GM13976 (cell line): ENCODE measurements at regions of chr6 and their contacts with region 1.

Region 1: GRCh38 chr6:10404107-10404798 is 10.6 kb downstream of the TFAP2A start:
- DNase-seq: peak; percentile 97
- CTCF ChIP-seq: peak; percentile 68

Region 2: DNA sequence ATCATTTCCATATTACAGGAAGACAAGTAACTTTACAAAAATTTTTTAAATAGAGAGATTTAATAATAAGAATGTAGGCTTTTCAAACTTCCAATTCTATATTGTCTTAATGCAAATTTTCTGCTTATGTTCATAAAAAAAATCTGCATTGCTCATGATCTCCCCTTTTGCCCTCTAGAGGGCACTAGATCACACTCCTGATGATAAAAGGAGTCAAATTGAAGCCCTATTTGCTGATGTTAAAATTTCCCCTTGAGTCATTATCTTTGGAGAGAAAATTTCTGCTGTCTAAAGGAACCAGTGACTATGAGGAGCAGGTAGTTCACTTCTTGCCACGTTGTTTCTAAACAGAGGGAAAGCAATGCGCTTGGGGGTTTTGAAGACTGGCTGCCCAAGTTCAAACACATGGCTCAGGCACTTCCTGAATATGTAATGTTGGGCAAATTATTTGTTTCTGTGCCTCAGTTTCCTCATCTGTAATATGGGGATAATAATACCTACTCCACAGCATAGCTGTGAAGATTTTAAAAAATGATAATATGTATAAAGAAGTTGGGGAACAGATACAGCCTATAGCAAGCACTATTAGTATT is 863.6 kb before region 1 on chr6:
- in situ Hi-C with region 1: loop called (anchors 25 kb)
- DNase-seq: peak; percentile 28
- CTCF ChIP-seq: peak; percentile 54

Region 3: GRCh38 chr6:10000541-10000940 is 403.7 kb before region 1 on chr6:
- in situ Hi-C with region 1: no loop called
- DNase-seq: no peak
- CTCF ChIP-seq: no peak